SK-N-SH (cell line): ENCODE measurements at regions of chr9 and their contacts with region 1.

Region 1: GRCh38 chr9:84170521-84171141 is 169.9 kb downstream of the SLC28A3 start:
- DNase-seq: peak; percentile 46
- H3K4me3 ChIP-seq: no peak overlapping the region; a peak in 1 of 4 replicates
- H3K27ac ChIP-seq: peak overlapping the region; percentile 77
- H3K4me1 ChIP-seq: peaks cover 10 to 23% of the 10 kb centered on the region in 2 experiments
- H3K27me3 ChIP-seq: no peaks in the 10 kb centered on the region
- CTCF ChIP-seq: no peak
- EP300 ChIP-seq: peak in 1 of 2 experiments; percentile 87; a peak in 1 of 4 replicates
- RAD21 ChIP-seq: no peak

Region 2: GRCh38 chr9:83932021-83932420 is 238.6 kb before region 1 on chr9:
- CTCF ChIA-PET with region 1: no interaction called
- POLR2A ChIA-PET with region 1: no interaction called
- DNase-seq: no peak
- H3K4me3 ChIP-seq: no peak overlapping the region
- H3K27ac ChIP-seq: no peak overlapping the region
- H3K4me1 ChIP-seq: peaks cover 2 to 32% of the 10 kb centered on the region in 2 experiments; a peak in 2 of 4 replicates
- H3K27me3 ChIP-seq: no peaks in the 10 kb centered on the region
- CTCF ChIP-seq: no peak
- EP300 ChIP-seq: no peak
- RAD21 ChIP-seq: no peak

Region 3: DNA sequence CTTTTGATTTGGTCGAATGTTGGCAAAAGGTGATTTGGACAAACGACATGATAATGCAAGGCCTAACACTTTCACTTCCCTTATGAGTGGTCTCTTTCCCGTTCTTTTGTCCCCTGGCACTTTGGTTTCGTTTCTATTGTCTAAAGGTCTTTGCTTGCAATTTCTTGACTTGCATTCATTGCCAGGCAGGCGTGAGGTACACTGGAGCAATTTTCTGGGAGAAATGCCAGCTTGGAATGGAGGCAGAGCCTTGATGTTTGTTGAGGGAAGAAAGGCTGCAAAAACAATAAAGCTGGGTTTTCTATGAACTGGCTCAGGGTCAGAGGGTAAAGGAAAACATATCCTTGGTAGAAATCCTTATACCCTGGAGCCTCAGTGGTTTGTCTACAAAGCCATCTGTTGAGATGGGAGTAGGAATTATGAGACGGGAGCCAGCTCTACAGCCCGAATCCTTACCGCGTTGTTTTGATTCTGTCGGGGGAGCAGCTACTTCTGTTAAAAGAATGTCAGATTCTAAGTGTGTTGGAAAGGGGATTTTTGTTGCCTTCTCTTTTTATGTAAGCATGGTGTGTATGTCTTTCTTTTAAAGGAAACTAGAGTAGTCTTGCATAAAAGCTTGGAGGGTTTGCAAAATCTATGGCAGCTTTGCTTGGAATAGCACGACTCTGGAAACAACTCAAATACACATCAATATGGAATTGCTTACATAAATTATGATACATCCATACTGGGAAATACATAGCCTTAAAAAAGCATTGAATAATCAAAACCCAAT is 31.1 kb before region 1 on chr9:
- CTCF ChIA-PET with region 1: interaction called, 11 read pairs
- POLR2A ChIA-PET with region 1: no interaction called
- DNase-seq: no peak
- H3K4me3 ChIP-seq: no peak overlapping the region
- H3K27ac ChIP-seq: no peak overlapping the region
- H3K4me1 ChIP-seq: peaks cover 0 to 5% of the 10 kb centered on the region in 2 experiments; a peak in 1 of 4 replicates
- H3K27me3 ChIP-seq: no peaks in the 10 kb centered on the region
- CTCF ChIP-seq: no peak
- EP300 ChIP-seq: no peak
- RAD21 ChIP-seq: no peak

Region 4: DNA sequence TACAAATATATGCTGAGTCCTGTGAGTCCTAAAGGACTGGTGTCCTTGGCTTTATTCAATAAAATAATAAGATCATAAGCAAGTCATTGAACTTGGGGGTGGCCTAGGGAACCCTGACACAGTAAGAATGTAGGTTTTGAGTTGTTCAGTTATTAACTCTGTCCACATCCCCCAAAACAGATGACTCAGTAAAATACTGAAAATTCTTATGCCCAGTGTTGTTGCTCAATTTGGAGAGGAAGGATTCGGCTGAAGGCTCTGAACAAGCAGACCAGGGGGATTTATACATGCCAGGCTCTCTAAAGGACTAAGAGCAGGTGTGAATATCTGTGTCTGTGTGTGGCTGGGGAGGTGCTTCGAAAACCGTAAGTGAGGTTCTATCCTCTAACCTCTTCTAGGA is 16.3 kb before region 1 on chr9:
- CTCF ChIA-PET with region 1: interaction called, 18 read pairs
- POLR2A ChIA-PET with region 1: no interaction called
- DNase-seq: no peak
- H3K4me3 ChIP-seq: no peak overlapping the region
- H3K27ac ChIP-seq: no peak overlapping the region
- H3K4me1 ChIP-seq: peaks cover 0 to 2% of the 10 kb centered on the region in 2 experiments; a peak in 2 of 4 replicates
- H3K27me3 ChIP-seq: no peaks in the 10 kb centered on the region
- CTCF ChIP-seq: no peak
- EP300 ChIP-seq: no peak
- RAD21 ChIP-seq: no peak

Region 5: DNA sequence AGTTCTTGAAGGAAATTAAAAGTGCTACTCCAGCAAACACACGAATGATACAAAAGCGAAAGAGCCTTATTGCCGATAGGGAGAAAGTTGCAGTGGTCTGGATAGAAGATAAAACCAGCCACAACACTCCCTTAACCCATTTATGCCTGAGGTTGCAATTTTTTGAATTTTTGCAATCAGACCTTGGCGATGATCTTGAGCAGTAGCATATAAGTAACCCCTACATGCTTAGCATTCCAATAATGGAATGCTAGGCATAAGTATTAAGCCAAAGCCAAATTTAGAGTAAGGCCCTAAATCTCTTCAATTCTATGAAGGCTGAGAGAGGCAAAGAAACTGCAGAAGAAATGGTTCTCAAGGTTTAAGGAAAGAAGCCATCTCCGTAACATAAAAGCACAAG is 16.5 kb after region 1 on chr9:
- CTCF ChIA-PET with region 1: interaction called, 32 read pairs
- POLR2A ChIA-PET with region 1: interaction called, 3 read pairs
- DNase-seq: no peak
- H3K4me3 ChIP-seq: no peak overlapping the region
- H3K27ac ChIP-seq: no peak overlapping the region
- H3K4me1 ChIP-seq: peaks cover 3 to 4% of the 10 kb centered on the region in 2 experiments; a peak in 3 of 4 replicates
- H3K27me3 ChIP-seq: no peaks in the 10 kb centered on the region
- CTCF ChIP-seq: no peak
- EP300 ChIP-seq: no peak
- RAD21 ChIP-seq: no peak